CD4-positive, alpha-beta T cell (primary cell): ENCODE measurements at regions of chr10 and their contacts with region 1.

Region 1: GRCh38 chr10:49592726-49593563 is 17.2 kb upstream of the SLC18A3 start:
- DNase-seq: peak; percentile 16 to 62 (median 37)
- ATAC-seq: peak; percentile 59
- H3K4me3 ChIP-seq: no peak overlapping the region
- H3K4me3 Mint-ChIP-seq: no peak overlapping the region
- H3K27ac ChIP-seq: no peak overlapping the region
- H3K27ac Mint-ChIP-seq: no peak overlapping the region
- H3K4me1 ChIP-seq: no peaks in the 10 kb centered on the region
- H3K4me1 Mint-ChIP-seq: no peaks in the 10 kb centered on the region
- H3K27me3 ChIP-seq: peaks cover 4 to 6% of the 10 kb centered on the region in 2 experiments
- H3K27me3 Mint-ChIP-seq: peaks cover 42% of the 10 kb centered on the region
- CTCF ChIP-seq: peak; percentile 84

Region 2: GRCh38 chr10:49632406-49633317 is 39.7 kb after region 1 on chr10:
- CTCF ChIA-PET with region 1: no interaction called
- POLR2A ChIA-PET with region 1: no interaction called
- intact Hi-C with region 1: no loop called
- DNase-seq: no peak
- ATAC-seq: no peak
- H3K4me3 ChIP-seq: no peak overlapping the region
- H3K4me3 Mint-ChIP-seq: no peak overlapping the region
- H3K27ac ChIP-seq: no peak overlapping the region
- H3K27ac Mint-ChIP-seq: no peak overlapping the region
- H3K4me1 ChIP-seq: no peaks in the 10 kb centered on the region
- H3K4me1 Mint-ChIP-seq: no peaks in the 10 kb centered on the region
- H3K27me3 ChIP-seq: no peaks in the 10 kb centered on the region
- H3K27me3 Mint-ChIP-seq: peaks cover 2% of the 10 kb centered on the region
- CTCF ChIP-seq: no peak

Region 3: GRCh38 chr10:50224330-50224952 is 631.5 kb after region 1 on chr10:
- CTCF ChIA-PET with region 1: no interaction called
- POLR2A ChIA-PET with region 1: no interaction called
- intact Hi-C with region 1: loop called (anchors 5 to 10 kb)
- DNase-seq: peak in 6 of 14 experiments; percentile 4 to 48 (median 20)
- ATAC-seq: no peak
- H3K4me3 ChIP-seq: no peak overlapping the region
- H3K4me3 Mint-ChIP-seq: no peak overlapping the region
- H3K27ac ChIP-seq: no peak overlapping the region
- H3K27ac Mint-ChIP-seq: no peak overlapping the region
- H3K4me1 ChIP-seq: no peaks in the 10 kb centered on the region
- H3K4me1 Mint-ChIP-seq: no peaks in the 10 kb centered on the region
- H3K27me3 ChIP-seq: peaks cover 0 to 14% of the 10 kb centered on the region in 2 experiments
- H3K27me3 Mint-ChIP-seq: peaks cover 9% of the 10 kb centered on the region
- CTCF ChIP-seq: no peak